Activated CD4-positive, alpha-beta T cell treated with anti-CD3 and anti-CD28 coated beads, Interleukin-2, amount 10 ng/mL, durations not matched to agents 24 days and 14 days (primary cell): ENCODE measurements at regions of chr6 and their contacts with region 1.

Region 1: DNA sequence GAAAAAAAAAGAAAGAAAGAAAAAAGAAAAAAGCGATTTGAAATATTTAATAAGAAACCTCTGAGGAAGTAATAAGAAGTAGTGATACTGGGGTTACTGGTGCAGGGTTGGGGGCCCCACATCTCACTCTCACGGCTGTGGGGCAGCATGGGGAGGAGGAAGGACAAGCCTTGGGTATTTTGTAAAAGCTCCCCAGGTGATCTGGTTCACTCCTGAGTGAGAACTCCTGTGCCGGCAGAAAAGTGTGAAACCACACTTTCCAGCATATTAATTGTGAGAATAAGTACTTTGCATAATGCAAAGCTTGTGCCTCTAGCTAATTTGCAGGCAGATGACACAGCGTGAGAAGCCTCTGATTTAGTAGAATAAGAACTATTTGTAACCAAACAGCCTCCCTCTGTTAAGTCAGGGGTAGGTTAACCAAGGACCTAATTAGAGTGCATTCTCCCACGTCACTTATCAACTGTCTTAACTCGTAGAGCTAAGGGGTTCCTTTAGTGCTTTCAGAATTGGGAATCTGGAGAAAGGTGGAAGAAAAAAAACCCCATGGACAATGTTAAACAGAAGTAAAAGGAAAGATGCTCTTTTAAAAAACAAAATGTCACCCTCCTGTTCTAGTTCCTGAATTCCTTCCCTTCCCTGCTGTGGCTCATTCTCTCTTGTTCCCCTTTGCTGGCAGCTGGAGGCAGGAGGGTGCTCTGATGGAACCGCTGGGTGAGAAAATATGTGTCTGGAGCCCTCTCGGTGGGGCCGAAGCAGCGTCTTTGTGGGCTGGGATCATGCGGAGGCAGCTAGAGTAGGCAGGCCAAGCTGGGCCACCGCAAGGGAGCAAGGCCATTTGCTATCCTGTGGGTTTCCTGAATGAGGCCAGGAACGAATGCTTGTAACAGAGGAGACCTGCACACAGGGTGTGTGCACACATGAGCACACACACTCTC is 108.7 kb downstream of the FYN start:
- DNase-seq: peak; percentile 82
- H3K4me3 Mint-ChIP-seq: peak overlapping the region; percentile 57
- H3K27ac Mint-ChIP-seq: peak overlapping the region; percentile 98
- H3K4me1 Mint-ChIP-seq: peaks cover 96% of the 10 kb centered on the region
- H3K27me3 Mint-ChIP-seq: no peaks in the 10 kb centered on the region

Region 2: GRCh38 chr6:111750753-111751684 is 13.5 kb before region 1 on chr6:
- intact Hi-C with region 1: loop called (anchors 1 kb)
- DNase-seq: peak; percentile 91
- H3K4me3 Mint-ChIP-seq: peak overlapping the region; percentile 77
- H3K27ac Mint-ChIP-seq: peak overlapping the region; percentile 99
- H3K4me1 Mint-ChIP-seq: peaks cover 83% of the 10 kb centered on the region
- H3K27me3 Mint-ChIP-seq: no peaks in the 10 kb centered on the region

Region 3: DNA sequence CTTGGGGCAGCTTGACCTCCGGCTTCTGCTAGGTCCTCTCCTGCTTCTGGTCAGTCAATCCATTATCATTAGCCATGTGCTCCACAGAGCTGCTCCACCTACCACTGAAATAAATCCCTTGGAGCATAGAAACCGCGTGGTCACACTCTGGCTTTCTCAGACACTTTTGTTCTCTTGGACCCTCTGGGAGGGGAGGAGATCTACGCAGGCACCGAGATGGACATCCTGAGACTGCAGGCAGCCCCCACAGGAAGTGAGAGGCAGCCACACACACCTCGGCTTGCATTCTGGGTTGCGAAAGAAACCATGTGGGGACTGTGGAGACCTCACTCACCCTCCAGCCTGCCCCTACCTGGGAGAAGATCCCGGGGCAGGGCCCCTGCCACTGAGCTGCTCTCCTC is 29.2 kb after region 1 on chr6:
- intact Hi-C with region 1: loop called (anchors 2 kb)
- DNase-seq: peak; percentile 80
- H3K4me3 Mint-ChIP-seq: peak overlapping the region; percentile 45
- H3K27ac Mint-ChIP-seq: peak overlapping the region; percentile 85
- H3K4me1 Mint-ChIP-seq: peaks cover 63% of the 10 kb centered on the region
- H3K27me3 Mint-ChIP-seq: no peaks in the 10 kb centered on the region

Region 4: GRCh38 chr6:111837641-111838500 is 73.4 kb after region 1 on chr6:
- intact Hi-C with region 1: loop called (anchors 1 kb)
- DNase-seq: peak; percentile 86
- H3K4me3 Mint-ChIP-seq: peak overlapping the region; percentile 75
- H3K27ac Mint-ChIP-seq: peak overlapping the region; percentile 96
- H3K4me1 Mint-ChIP-seq: peaks cover 64% of the 10 kb centered on the region
- H3K27me3 Mint-ChIP-seq: no peaks in the 10 kb centered on the region

Region 5: DNA sequence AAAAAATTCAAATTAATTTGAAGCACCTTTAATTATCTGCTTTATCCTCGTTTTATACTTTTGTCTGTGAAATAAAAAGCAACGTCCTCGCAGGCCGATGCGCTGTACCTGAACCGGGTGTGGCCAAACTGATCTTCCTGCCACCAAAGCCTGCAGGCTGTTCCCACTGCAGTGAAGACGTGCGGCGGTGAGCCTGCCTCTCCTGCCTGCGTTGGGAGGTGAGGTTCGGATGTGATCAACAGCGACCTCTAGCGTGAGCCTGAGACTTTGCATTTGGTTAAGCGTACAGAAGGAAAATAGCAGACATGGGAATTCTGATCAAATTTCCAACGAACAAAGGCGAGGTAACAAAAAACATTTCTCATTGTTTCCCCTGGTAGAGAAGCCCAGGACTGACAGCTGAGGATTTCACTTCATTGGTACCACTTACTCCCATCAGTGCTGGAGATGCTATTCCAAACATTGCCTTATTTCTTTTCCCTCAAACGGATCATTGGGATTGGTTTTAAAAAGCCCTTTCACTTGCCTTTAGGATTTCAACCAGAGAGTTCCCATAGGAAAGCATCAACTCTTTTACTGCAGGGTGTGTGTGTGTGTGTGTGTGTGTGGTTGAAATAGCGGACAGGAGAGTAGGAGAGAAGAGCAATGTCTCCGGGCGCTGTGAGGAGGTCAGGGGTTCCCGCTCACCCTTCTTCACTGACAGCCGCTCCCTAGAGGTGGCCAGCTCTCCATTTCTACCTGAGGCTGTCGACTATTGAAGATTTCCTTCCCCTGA is 232.8 kb after region 1 on chr6:
- intact Hi-C with region 1: loop called (anchors 2 kb)
- DNase-seq: peak; percentile 93
- H3K4me3 Mint-ChIP-seq: peak overlapping the region; percentile 64
- H3K27ac Mint-ChIP-seq: no peak overlapping the region
- H3K4me1 Mint-ChIP-seq: peaks cover 40% of the 10 kb centered on the region
- H3K27me3 Mint-ChIP-seq: no peaks in the 10 kb centered on the region

Region 6: GRCh38 chr6:112037783-112038216 is 273.3 kb after region 1 on chr6:
- intact Hi-C with region 1: loop called (anchors 2 kb)
- DNase-seq: no peak
- H3K4me3 Mint-ChIP-seq: no peak overlapping the region
- H3K27ac Mint-ChIP-seq: peak overlapping the region; percentile 9
- H3K4me1 Mint-ChIP-seq: peaks cover 48% of the 10 kb centered on the region
- H3K27me3 Mint-ChIP-seq: no peaks in the 10 kb centered on the region

Region 7: GRCh38 chr6:112490316-112490715 is 725.8 kb after region 1 on chr6:
- intact Hi-C with region 1: no loop called
- DNase-seq: no peak
- H3K4me3 Mint-ChIP-seq: no peak overlapping the region
- H3K27ac Mint-ChIP-seq: no peak overlapping the region
- H3K4me1 Mint-ChIP-seq: no peaks in the 10 kb centered on the region
- H3K27me3 Mint-ChIP-seq: no peaks in the 10 kb centered on the region